ENCODE measurements at regions of chr3 and their contacts with region 1.

Region 1: GRCh38 chr3:55362210-55362960 is 124.7 kb downstream of the WNT5A start:
- DNase-seq: peak; percentile 23 to 85
- H3K4me3 ChIP-seq: no peak overlapping the region
- H3K27ac ChIP-seq: peak overlapping the region; percentile 60
- H3K4me1 ChIP-seq: peaks cover 29% of the 10 kb centered on the region
- H3K27me3 ChIP-seq: no peaks in the 10 kb centered on the region
- CTCF ChIP-seq: no peak

Region 2: DNA sequence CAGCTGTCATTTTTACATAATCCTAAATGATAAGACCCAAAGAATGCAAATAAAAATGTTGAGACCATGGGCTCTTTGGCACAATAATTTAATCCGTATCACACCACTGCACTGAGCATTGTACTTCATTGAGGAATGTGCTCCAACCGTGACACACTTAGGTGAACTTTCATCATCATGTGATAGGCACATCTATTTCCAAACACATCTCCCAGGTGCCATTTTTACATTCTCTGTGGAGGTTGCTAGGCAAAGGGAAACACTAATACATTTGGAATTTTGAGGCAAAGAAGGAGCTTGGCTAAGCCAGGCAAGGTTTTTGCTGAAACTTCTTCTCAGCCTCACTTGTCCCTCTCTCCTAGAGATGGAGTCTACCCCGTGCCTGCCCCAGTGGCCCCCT is 503.2 kb before region 1 on chr3:
- CTCF ChIA-PET with region 1: no interaction called
- POLR2A ChIA-PET with region 1: no interaction called
- intact Hi-C with region 1: loop called (anchors 5 kb)
- DNase-seq: peak in 1 of 2 experiments; percentile 82
- H3K4me3 ChIP-seq: no peak overlapping the region
- H3K27ac ChIP-seq: no peak overlapping the region
- H3K4me1 ChIP-seq: peaks cover 11% of the 10 kb centered on the region; the same call in 1 of the 2 replicates
- H3K27me3 ChIP-seq: no peaks in the 10 kb centered on the region
- CTCF ChIP-seq: no peak

Region 3: DNA sequence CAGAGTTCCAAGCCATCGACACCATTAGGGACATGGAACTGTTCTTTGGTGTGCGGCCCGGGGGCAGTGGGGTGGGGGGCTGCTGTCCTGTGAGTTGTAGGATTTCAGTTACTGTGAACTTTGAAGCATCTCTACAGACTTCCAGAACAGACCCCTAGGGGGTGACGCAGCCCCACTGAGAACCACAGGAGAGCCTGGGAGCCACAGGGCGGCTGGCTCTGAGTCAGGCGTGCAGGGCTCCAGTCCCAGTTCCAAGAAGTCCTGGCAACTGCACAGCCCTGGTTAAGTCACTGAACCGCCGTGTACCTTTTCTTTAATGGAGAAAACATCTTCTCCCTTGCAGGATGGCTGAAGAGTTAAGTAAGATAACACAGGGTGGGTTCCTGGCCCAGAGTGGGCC is 411.0 kb before region 1 on chr3:
- CTCF ChIA-PET with region 1: no interaction called
- POLR2A ChIA-PET with region 1: no interaction called
- intact Hi-C with region 1: loop called (anchors 1 kb)
- DNase-seq: peak in 1 of 2 experiments; percentile 42
- H3K4me3 ChIP-seq: no peak overlapping the region
- H3K27ac ChIP-seq: no peak overlapping the region
- H3K4me1 ChIP-seq: peaks cover 17% of the 10 kb centered on the region
- H3K27me3 ChIP-seq: no peaks in the 10 kb centered on the region
- CTCF ChIP-seq: 0 out of 2 replicates have a peak, but pooled peaks have one; percentile 33

Region 4: GRCh38 chr3:55042591-55042990 is 319.8 kb before region 1 on chr3:
- CTCF ChIA-PET with region 1: no interaction called
- POLR2A ChIA-PET with region 1: no interaction called
- intact Hi-C with region 1: loop called (anchors 5 kb)
- DNase-seq: no peak
- H3K4me3 ChIP-seq: no peak overlapping the region
- H3K27ac ChIP-seq: no peak overlapping the region
- H3K4me1 ChIP-seq: no peaks in the 10 kb centered on the region
- H3K27me3 ChIP-seq: no peaks in the 10 kb centered on the region
- CTCF ChIP-seq: no peak

Region 5: DNA sequence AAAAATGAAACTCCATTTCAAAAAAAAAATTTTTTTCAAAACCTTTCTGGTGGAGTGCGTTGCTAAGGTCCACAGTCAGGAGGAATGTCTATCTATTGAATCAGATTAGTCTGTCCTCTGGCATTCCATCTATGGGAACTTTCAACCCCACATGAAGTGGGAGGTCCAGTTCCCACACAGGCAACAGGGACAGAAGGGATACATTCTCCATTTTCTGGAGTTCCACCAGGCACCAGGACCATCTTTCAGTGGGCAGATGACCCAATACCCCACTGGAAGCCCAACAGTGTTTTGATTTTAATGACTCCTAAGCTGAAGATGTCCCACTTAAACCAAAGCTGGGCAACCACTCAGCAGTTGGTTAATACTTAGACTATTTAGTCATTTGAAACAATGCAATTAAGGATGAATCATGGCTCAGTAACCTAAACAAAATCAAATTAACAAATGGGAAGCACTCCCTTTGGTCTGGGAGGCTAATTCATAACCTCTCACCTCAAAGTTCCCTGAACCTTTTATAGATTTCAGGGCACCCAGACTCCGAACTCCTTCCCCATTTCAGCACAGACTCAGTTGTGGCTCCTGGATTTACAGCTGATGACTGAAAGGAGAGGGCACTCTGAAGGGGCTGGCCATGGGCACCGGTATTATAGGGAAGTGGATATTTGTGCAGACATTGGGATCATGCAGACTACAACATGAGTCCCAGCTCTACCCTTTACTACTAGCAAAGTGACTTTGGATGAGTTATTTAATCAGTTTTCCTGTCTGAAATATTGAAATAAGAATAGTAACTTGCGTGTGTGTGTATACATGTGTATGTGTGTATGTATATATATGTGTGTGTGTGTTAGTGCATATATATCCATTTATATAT is 170.2 kb before region 1 on chr3:
- CTCF ChIA-PET with region 1: no interaction called
- POLR2A ChIA-PET with region 1: no interaction called
- intact Hi-C with region 1: loop called (anchors 1 kb)
- DNase-seq: peak; percentile 52 to 83
- H3K4me3 ChIP-seq: no peak overlapping the region
- H3K27ac ChIP-seq: peak overlapping the region; percentile 93
- H3K4me1 ChIP-seq: peaks cover 18% of the 10 kb centered on the region
- H3K27me3 ChIP-seq: no peaks in the 10 kb centered on the region
- CTCF ChIP-seq: no peak

Region 6: GRCh38 chr3:55416351-55416821 is 54.0 kb after region 1 on chr3:
- CTCF ChIA-PET with region 1: interaction called, 3 read pairs
- POLR2A ChIA-PET with region 1: interaction called, 6 read pairs
- intact Hi-C with region 1: loop called (anchors 2 kb)
- DNase-seq: peak; percentile 81 to 93
- H3K4me3 ChIP-seq: no peak overlapping the region
- H3K27ac ChIP-seq: peak overlapping the region; percentile 54
- H3K4me1 ChIP-seq: peaks cover 20% of the 10 kb centered on the region
- H3K27me3 ChIP-seq: no peaks in the 10 kb centered on the region
- CTCF ChIP-seq: no peak

Measured in PC-9 (cell line).